Cardiac septum (tissue), 1 donor: ENCODE measurements at regions of chr1 and their contacts with region 1.

Region 1: GRCh38 chr1:244835276-244836134 is at the start of gene COX20:
- DNase-seq: peak; percentile 94
- total RNA-seq, gene COX20: 83.7 TPM

Region 2: GRCh38 chr1:244461245-244462071 is 374.0 kb before region 1 on chr1 and contains the start of gene CATSPERE:
- intact Hi-C with region 1: loop called (anchors 10 kb)
- DNase-seq: peak; percentile 95
- total RNA-seq, gene CATSPERE: 0.38 TPM

Region 3: GRCh38 chr1:244815600-244816099 is 19.9 kb before region 1 on chr1:
- intact Hi-C with region 1: no loop called
- DNase-seq: no peak

Region 4: DNA sequence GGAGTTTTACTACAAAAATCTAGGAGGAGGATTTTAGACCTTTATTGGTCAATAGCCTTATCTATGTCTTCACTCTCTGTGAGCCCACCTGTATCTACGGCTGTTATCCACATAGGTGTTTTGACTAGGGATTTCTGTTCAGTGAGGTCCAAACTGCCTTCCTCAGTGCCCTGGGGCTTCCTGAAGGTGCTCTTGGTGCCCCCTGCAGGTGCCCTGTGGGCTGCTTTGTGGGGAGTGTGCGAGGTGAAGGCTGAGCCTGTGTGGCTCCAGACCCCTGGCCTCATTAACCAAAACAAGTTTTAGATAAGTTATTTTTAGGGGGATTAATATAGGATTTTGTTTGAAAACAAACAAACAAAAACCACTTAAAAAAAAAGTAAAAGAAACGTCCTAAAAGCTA is 441.8 kb after region 1 on chr1:
- intact Hi-C with region 1: no loop called
- DNase-seq: no peak